ENCODE measurements at regions of chr17 and their contacts with region 1.

Region 1: DNA sequence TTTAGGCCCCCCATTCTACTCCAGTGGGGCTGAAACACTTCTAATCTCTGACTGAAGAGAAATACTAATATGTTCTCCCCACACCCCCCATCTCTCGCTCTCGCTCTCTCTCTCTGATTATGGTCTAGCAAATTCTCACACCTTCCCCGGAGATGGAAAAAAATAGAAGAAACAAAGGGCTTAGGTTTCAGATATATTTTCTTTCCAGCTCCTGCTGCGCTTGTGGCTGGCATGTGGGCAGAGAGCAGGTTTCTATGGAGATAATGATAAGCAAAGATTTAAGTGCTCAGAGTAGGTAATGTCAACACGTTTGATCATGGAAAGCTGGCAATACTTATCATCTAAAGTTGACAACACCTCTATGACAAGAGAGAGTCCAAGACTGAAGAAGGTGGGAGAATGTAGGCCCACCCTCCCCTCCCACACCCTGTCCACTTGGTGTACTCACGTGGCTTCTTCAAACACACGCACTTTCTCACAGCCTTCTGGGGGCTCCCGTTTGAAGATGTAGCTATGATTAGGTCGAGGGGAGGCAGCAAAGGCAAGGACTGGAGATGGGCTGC is 8.0 kb upstream of the SLC35B1 start:
- DNase-seq: no peak
- H3K4me3 ChIP-seq: no peak overlapping the region
- H3K27ac ChIP-seq: peak overlapping the region in 1 of 2 experiments; percentile 66
- H3K4me1 ChIP-seq: peaks cover 0 to 15% (median 6%) of the 10 kb centered on the region in 4 experiments
- H3K27me3 ChIP-seq: no peaks in the 10 kb centered on the region

Region 2: DNA sequence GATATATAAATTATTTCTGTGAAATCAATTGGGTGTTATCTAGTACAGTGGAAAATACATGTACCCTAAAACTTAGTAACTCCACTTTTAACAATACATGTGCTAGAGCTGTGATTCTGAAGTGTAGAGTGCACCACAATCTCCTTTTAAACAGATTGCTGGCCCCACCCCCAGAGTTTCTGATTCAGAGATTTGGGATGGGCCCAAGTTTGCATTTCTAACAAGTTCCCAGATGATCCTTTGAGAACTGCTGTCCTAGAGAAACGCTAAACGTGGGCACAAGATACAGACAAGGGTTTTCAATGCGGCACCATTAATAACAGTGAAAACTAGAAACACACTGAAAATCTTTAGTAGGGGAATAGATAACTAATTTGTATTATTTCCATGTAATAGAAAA is 90.9 kb before region 1 on chr17:
- CTCF ChIA-PET with region 1: no interaction called
- POLR2A ChIA-PET with region 1: no interaction called
- DNase-seq: no peak
- H3K4me3 ChIP-seq: no peak overlapping the region
- H3K27ac ChIP-seq: no peak overlapping the region
- H3K4me1 ChIP-seq: peaks cover 4 to 10% (median 8%) of the 10 kb centered on the region in 4 experiments
- H3K27me3 ChIP-seq: no peaks in the 10 kb centered on the region

Region 3: DNA sequence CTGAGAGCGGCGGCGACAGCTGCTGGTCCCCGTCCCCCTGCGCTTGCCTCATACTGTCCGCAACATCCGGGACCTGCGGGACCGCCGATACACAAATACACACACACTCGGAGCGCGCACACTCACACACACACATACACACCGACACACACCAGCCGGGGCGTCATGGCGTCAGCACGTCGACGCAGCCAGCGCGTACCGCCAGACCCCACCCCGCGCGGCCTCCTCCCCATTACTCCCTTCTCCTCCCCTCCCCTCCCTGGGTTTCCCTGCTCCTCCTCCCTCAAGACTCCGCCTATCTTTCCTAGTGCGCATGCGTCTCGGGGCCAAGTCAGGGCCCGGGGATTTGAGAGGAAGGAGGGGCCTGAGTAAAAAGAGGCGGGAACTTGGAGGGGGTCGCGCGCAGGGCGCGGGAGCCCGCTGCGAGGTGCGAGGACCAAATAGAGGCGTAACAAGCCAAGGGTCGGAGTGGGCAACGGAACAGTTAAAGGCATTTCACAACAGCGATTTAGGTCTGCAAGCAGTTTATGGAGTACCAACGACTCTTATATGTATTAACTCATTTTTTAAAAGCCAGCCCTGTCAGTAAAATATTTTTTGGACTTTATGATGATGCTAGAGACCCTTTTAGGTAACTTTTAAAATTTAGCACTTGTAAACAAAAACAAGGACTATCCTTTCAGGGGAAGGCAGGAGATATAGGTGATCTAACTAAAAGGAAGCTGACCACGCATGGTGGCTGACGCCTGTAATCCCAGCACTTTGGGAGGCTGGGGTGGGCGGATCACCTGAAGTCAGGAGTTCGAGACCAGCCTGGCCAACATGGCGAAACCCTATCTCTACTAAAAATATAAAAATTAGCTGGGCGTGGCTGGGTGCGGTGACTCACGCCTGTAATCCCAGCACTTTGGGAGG is 37.6 kb before region 1 on chr17 and contains the start of gene SPOP:
- CTCF ChIA-PET with region 1: no interaction called
- POLR2A ChIA-PET with region 1: no interaction called
- DNase-seq: peak; percentile 99 to 100 (median 100)
- H3K4me3 ChIP-seq: peak within 1 kb of the TSS; percentile 43 to 89 (median 70)
- H3K27ac ChIP-seq: peak within 1 kb of the TSS; percentile 98
- H3K4me1 ChIP-seq: peaks cover 22 to 42% (median 26%) of the 10 kb centered on the region in 4 experiments
- H3K27me3 ChIP-seq: no peaks in the 10 kb centered on the region

Region 4: GRCh38 chr17:49730078-49730784 is 14.4 kb after region 1 on chr17:
- CTCF ChIA-PET with region 1: interaction called, 38 read pairs
- POLR2A ChIA-PET with region 1: no interaction called
- DNase-seq: no peak
- H3K4me3 ChIP-seq: peak overlapping the region in 2 of 7 experiments; percentile 2 to 35
- H3K27ac ChIP-seq: peak overlapping the region; percentile 52 to 74
- H3K4me1 ChIP-seq: peaks cover 9 to 61% (median 41%) of the 10 kb centered on the region in 4 experiments
- H3K27me3 ChIP-seq: no peaks in the 10 kb centered on the region